ENCODE measurements at regions of chr21 and their contacts with region 1.

Region 1: GRCh38 chr21:31354604-31355443 is 10.8 kb upstream of the TIAM1 start:
- DNase-seq: peak; percentile 78
- H3K4me3 Mint-ChIP-seq: peak overlapping the region; percentile 20
- H3K27ac Mint-ChIP-seq: peak overlapping the region; percentile 66
- H3K4me1 Mint-ChIP-seq: peaks cover 40% of the 10 kb centered on the region
- H3K27me3 Mint-ChIP-seq: no peaks in the 10 kb centered on the region

Region 2: GRCh38 chr21:31098576-31099005 is 256.2 kb before region 1 on chr21:
- intact Hi-C with region 1: loop called (anchors 5 kb)
- DNase-seq: peak; percentile 60
- H3K4me3 Mint-ChIP-seq: no peak overlapping the region
- H3K27ac Mint-ChIP-seq: no peak overlapping the region
- H3K4me1 Mint-ChIP-seq: peaks cover 27% of the 10 kb centered on the region
- H3K27me3 Mint-ChIP-seq: peaks cover 13% of the 10 kb centered on the region

Region 3: DNA sequence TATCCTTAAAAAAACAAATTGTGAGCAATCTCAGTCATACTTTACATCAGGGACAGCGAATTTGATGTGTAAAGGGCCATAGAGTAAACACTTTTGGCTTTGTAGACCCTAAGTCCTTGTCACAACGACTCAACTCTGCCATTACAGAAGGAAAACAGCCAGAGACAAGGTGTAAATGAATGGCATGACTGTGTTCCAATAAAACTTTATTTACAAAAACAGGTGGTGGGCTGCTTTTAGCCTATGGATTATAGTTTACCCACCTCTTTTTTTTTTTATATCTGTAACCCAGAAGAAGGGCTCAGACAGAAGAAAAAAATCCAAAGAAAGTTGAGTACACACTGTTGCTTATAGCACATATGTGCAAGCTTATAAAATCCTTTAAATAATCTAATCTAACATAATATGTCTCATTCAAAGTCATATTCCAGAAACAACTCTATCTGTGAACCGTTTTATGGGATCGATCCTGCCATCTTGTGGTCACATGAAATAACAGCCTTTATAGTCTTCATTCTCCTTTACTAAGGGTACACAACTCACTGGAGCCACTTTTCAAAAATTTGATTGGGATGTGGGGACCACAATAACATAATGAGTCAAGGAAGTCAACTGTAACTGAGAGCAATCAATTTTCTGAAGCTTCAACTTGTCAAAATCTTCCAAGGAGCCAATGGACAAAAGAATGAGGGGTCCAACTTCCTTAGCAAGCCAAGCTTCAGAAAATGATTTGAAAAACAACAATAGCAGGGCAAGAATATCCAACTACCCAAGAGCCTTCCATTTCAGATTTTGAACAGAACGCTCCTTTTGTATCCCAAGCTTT is 174.4 kb before region 1 on chr21:
- intact Hi-C with region 1: loop called (anchors 1 kb)
- DNase-seq: no peak
- H3K4me3 Mint-ChIP-seq: peak overlapping the region; percentile 93
- H3K27ac Mint-ChIP-seq: peak overlapping the region; percentile 99
- H3K4me1 Mint-ChIP-seq: peaks cover 62% of the 10 kb centered on the region
- H3K27me3 Mint-ChIP-seq: no peaks in the 10 kb centered on the region

Region 4: DNA sequence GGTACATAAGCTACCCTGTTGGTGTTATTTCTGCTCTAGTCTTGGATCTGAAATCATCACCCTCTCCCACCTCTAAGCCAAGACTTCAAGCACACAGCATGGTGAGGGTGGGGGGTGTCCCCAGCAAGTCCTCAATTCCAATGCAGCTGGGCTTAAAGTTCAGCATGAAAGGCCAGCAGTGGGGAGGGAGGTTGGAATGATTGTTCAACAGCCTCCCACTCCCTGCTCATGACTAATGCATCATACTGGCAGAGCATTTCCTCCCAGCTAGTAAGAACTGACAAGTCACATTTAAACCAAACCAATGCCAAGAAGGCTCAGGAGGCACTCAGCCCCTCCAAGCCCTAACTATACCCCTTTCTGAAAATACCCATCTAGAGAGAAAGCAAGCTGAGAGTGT is 60.8 kb before region 1 on chr21:
- intact Hi-C with region 1: loop called (anchors 1 kb)
- DNase-seq: no peak
- H3K4me3 Mint-ChIP-seq: no peak overlapping the region
- H3K27ac Mint-ChIP-seq: peak overlapping the region; percentile 20
- H3K4me1 Mint-ChIP-seq: peaks cover 20% of the 10 kb centered on the region
- H3K27me3 Mint-ChIP-seq: no peaks in the 10 kb centered on the region

Region 5: GRCh38 chr21:31340942-31341487 is 13.8 kb before region 1 on chr21:
- intact Hi-C with region 1: loop called (anchors 1 kb)
- DNase-seq: no peak
- H3K4me3 Mint-ChIP-seq: no peak overlapping the region
- H3K27ac Mint-ChIP-seq: no peak overlapping the region
- H3K4me1 Mint-ChIP-seq: peaks cover 50% of the 10 kb centered on the region
- H3K27me3 Mint-ChIP-seq: peaks cover 26% of the 10 kb centered on the region

Region 6: GRCh38 chr21:31426235-31426797 is 71.5 kb after region 1 on chr21:
- intact Hi-C with region 1: loop called (anchors 1 kb)
- DNase-seq: no peak
- H3K4me3 Mint-ChIP-seq: no peak overlapping the region
- H3K27ac Mint-ChIP-seq: no peak overlapping the region
- H3K4me1 Mint-ChIP-seq: peaks cover 13% of the 10 kb centered on the region
- H3K27me3 Mint-ChIP-seq: peaks cover 1% of the 10 kb centered on the region

Region 7: DNA sequence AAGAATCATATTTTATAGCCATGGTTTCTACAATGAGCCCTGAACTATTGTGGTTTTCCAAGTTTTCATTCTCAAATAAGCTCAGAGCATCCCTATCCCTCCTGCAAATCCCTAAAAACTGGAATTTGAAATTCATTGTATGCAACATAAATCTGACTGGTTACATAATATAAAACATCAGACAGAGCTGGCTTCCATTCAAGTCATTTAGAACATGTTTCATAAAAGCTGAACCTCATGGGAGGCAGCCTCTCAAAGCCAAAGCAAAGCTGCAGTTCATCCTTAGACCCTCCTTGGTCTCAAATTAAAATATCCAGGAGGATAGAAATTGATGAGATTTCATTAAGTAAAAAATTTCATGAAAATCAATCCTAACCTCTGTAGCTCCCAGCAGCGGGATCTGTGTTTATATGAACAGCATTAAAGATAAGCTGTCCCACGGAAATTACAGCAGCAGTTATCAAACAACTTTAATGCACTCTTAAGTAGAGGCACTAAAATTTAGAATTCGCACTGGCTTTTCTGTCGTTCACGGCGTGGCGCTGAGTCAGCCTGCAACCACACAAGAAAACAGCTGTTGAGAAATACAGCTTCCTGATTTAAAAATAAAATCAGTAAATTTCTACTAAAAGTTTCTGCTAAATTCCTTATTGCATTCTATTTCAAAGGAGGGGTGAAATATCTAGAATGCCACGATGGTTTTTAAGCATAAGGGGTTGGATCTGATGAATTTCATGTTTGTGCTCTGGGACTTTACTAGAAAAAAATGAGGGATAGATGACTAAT is 89.1 kb after region 1 on chr21:
- intact Hi-C with region 1: no loop called
- DNase-seq: no peak
- H3K4me3 Mint-ChIP-seq: no peak overlapping the region
- H3K27ac Mint-ChIP-seq: no peak overlapping the region
- H3K4me1 Mint-ChIP-seq: peaks cover 35% of the 10 kb centered on the region
- H3K27me3 Mint-ChIP-seq: peaks cover 2% of the 10 kb centered on the region

Region 8: DNA sequence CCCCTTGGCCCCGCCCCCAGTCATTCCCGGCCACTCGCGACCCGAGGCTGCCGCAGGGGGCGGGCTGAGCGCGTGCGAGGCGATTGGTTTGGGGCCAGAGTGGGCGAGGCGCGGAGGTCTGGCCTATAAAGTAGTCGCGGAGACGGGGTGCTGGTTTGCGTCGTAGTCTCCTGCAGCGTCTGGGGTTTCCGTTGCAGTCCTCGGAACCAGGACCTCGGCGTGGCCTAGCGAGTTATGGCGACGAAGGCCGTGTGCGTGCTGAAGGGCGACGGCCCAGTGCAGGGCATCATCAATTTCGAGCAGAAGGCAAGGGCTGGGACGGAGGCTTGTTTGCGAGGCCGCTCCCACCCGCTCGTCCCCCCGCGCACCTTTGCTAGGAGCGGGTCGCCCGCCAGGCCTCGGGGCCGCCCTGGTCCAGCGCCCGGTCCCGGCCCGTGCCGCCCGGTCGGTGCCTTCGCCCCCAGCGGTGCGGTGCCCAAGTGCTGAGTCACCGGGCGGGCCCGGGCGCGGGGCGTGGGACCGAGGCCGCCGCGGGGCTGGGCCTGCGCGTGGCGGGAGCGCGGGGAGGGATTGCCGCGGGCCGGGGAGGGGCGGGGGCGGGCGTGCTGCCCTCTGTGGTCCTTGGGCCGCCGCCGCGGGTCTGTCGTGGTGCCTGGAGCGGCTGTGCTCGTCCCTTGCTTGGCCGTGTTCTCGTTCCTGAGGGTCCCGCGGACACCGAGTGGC is 304.9 kb after region 1 on chr21 and contains the start of gene SOD1:
- intact Hi-C with region 1: loop called (anchors 10 kb)
- DNase-seq: peak; percentile 96
- H3K4me3 Mint-ChIP-seq: peak within 1 kb of the TSS; percentile 99
- H3K27ac Mint-ChIP-seq: peak within 1 kb of the TSS; percentile 98
- H3K4me1 Mint-ChIP-seq: peaks cover 47% of the 10 kb centered on the region
- H3K27me3 Mint-ChIP-seq: no peaks in the 10 kb centered on the region
- total RNA-seq, gene SOD1: 284 and 286 TPM in 2 replicates